ENCODE measurements at regions of chr22 and their contacts with region 1.

Region 1: DNA sequence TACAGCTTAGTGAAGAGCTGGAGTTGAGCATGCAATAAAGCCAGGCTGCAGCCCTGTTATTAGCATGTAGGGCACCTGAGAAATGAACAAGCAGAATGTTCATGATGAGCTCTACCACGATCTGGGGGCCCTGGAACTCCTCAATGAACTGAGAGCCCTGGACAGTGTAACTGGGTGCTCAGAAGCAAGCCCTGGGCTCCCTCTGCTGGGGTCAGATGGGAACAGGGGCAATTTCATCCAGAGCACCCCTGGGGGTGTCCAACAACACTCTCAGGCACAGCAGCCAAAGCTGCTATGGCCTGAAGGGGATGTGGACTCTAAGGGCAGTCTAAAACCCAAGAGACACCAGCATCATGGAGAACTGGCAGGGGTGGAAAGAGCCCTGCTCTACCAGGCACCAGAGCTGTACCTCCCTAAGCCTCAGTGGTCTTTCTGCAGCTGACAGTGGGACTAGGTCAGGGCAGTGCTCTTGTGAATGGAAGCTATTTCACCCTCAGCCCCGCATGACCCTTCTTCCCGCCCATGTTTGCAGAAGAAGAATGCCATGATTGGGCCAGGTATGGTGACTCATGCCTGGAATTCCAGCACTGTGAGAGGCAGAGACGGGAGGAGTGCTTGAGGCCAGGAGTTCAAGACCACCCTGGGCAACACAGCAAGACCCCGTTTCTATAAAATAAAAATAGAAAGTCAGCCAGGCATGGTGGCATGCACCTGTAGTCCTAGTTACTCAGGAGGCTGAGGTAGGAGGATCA is 28.9 kb downstream of the THOC5 start:
- H3K4me3 ChIP-seq: no peak overlapping the region
- H3K27ac ChIP-seq: no peak overlapping the region
- H3K4me1 ChIP-seq: no peaks in the 10 kb centered on the region
- CTCF ChIP-seq: peak; percentile 76

Region 2: GRCh38 chr22:29394931-29395581 is 129.6 kb before region 1 on chr22:
- CTCF ChIA-PET with region 1: interaction called, 17 read pairs
- POLR2A ChIA-PET with region 1: no interaction called
- H3K4me3 ChIP-seq: no peak overlapping the region
- H3K27ac ChIP-seq: no peak overlapping the region
- H3K4me1 ChIP-seq: peaks cover 3% of the 10 kb centered on the region; the same call in 1 of the 2 replicates
- CTCF ChIP-seq: peak; percentile 96

Region 3: GRCh38 chr22:29617922-29618629 is 93.5 kb after region 1 on chr22:
- CTCF ChIA-PET with region 1: no interaction called
- POLR2A ChIA-PET with region 1: no interaction called
- H3K4me3 ChIP-seq: no peak overlapping the region
- H3K27ac ChIP-seq: no peak overlapping the region
- H3K4me1 ChIP-seq: peaks cover 26% of the 10 kb centered on the region
- CTCF ChIP-seq: no peak

Measured in HEK293 (cell line).